ENCODE measurements at regions of chr2 and their contacts with region 1.

Region 1: DNA sequence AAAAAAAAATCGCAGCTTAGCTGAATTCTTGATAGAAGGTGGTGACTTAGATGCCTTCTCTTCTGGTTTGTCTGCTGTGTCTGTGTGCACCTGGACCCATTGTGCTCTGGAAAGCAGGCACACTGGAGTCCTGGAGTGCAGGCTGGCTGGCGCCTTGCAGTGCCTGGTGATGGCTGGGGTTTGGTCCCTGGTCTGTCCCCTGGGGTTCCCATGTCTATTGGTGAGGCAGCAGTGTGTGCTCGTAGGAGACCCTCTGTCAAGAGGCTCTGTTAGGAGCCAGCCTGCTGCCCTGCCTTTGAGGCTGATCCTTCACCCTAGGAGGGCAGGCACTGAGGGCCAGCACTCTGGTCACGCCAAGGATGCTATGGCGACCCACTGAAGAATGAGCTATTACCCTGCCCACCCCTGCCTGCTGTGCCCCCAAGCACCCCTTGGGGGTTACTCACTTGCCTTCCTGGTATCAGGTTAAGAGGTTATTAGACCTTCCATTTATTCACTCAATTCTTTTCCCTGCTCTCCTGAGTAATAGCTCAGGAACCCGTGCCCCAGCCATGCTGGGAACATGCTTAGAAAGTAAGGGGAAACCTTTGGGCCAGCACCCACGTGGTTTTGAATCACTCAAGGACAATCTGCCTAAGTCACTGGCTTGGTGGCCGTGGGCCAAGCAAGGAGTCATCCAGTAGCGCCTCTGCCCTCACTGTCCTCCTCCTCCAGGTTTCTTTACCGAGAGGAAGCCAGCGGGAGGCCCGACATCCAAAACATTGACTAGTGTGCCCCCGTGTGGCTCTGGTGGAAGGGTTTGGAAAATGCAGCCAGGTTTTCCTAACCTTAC is 284.5 kb downstream of the PRKCE start:
- DNase-seq: peak; percentile 94 to 99
- H3K4me3 ChIP-seq: no peak overlapping the region
- H3K27ac ChIP-seq: peak overlapping the region; percentile 55
- H3K4me1 ChIP-seq: peaks cover 44% of the 10 kb centered on the region
- H3K27me3 ChIP-seq: no peaks in the 10 kb centered on the region
- CTCF ChIP-seq: peak; percentile 93

Region 2: DNA sequence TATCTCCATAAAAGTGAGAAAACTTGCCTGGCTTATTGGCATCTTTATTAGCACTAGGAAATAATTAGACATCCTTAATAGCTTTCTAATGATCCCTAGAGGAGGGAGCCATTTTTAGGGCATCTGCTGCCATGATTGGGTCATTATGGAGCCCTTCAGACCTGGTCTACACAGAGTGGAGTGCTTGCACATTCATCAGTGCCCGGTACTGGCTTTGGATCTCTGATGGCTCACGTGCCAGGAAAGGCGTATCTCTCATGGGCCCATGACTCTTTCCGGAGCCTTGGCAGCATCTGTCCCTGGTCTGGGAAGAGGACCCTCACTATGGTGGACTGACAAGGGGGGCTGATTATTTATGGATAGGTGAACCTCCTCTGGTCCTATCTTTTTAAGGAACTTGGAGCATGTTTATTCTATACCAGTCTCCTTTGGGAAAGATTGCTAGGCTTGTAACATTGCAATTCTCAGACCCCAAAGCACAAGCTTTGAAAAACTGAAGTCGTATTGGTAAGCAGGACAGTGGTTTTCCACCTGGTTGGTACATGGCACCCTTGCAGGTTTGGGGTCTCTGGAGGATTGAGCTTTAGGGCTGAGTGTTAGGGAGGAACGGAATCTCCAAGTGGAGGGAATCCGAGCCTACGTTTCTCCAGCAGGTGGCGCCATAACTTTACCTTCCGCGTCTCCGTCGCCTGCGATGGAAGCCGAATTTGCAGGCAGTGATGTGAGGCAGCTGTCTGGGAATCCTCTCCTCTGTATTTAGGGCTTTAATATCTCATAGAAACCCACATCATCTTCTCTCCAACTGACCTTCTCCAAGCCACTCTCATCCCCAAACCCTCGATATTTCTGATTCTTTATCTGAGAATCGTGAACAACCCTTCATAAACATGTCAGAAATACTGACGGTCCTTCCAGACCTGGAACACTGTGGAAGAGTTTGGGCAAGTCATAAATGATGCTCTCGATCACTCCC is 954.6 kb before region 1 on chr2:
- CTCF ChIA-PET with region 1: no interaction called
- POLR2A ChIA-PET with region 1: no interaction called
- intact Hi-C with region 1: loop called (anchors 5 kb)
- DNase-seq: peak; percentile 62 to 76
- H3K4me3 ChIP-seq: no peak overlapping the region
- H3K27ac ChIP-seq: no peak overlapping the region
- H3K4me1 ChIP-seq: no peaks in the 10 kb centered on the region
- H3K27me3 ChIP-seq: no peaks in the 10 kb centered on the region
- CTCF ChIP-seq: peak; percentile 96

Region 3: GRCh38 chr2:45675263-45675812 is 260.7 kb before region 1 on chr2:
- CTCF ChIA-PET with region 1: no interaction called
- POLR2A ChIA-PET with region 1: no interaction called
- intact Hi-C with region 1: loop called (anchors 1 kb)
- DNase-seq: peak; percentile 72 to 99
- H3K4me3 ChIP-seq: peak overlapping the region; percentile 32; the same call in 1 of the 2 replicates
- H3K27ac ChIP-seq: peak overlapping the region; percentile 94
- H3K4me1 ChIP-seq: peaks cover 85% of the 10 kb centered on the region
- H3K27me3 ChIP-seq: no peaks in the 10 kb centered on the region
- CTCF ChIP-seq: no peak

Region 4: DNA sequence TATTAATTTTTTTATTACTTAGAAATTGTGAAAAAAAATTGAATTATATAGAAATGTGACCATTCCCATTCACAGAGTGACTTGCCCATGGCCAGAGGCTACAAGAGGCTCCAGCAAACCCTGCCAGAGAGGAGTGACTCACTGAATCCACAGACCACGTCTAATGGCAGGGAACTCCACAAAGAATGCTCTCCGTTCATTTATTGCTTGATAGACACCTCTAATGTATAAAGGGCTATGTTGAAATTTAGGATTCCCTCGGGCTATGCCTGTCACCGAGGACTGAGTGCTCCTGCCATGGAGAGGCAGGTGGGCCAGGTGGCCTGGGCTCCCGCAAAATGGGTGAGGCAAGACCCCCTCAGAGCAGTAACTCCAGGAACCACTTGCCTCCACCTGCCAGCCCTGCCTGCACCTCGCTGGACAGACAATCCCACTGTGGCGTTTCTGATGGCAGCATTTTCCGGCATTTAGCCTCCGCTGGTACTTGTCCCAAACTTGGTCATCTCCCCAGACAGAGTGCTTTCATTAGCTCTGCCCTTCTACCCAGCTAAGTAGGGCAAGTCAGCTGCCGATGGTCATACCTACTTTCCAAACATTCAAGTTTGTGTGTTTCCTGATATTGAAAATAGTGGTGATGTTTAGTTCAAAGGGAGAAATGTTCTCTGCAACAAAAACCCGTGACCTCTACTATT is 84.2 kb before region 1 on chr2:
- CTCF ChIA-PET with region 1: no interaction called
- POLR2A ChIA-PET with region 1: no interaction called
- intact Hi-C with region 1: loop called (anchors 1 kb)
- DNase-seq: peak; percentile 71 to 100
- H3K4me3 ChIP-seq: peak overlapping the region; percentile 15; the same call in 1 of the 2 replicates
- H3K27ac ChIP-seq: peak overlapping the region; percentile 58
- H3K4me1 ChIP-seq: peaks cover 36% of the 10 kb centered on the region
- H3K27me3 ChIP-seq: no peaks in the 10 kb centered on the region
- CTCF ChIP-seq: no peak

Region 5: GRCh38 chr2:45964226-45964845 is 28.3 kb after region 1 on chr2:
- CTCF ChIA-PET with region 1: no interaction called
- POLR2A ChIA-PET with region 1: interaction called, 4 read pairs
- intact Hi-C with region 1: loop called (anchors 1 kb)
- DNase-seq: peak; percentile 99 to 100
- H3K4me3 ChIP-seq: no peak overlapping the region
- H3K27ac ChIP-seq: peak overlapping the region; percentile 84
- H3K4me1 ChIP-seq: peaks cover 58% of the 10 kb centered on the region
- H3K27me3 ChIP-seq: no peaks in the 10 kb centered on the region
- CTCF ChIP-seq: no peak

Region 6: GRCh38 chr2:46306330-46306751 is 370.3 kb after region 1 on chr2:
- CTCF ChIA-PET with region 1: no interaction called
- POLR2A ChIA-PET with region 1: no interaction called
- intact Hi-C with region 1: loop called (anchors 2 kb)
- DNase-seq: peak; percentile 40 to 100
- H3K4me3 ChIP-seq: peak overlapping the region; percentile 43; the same call in 1 of the 2 replicates
- H3K27ac ChIP-seq: peak overlapping the region; percentile 87
- H3K4me1 ChIP-seq: peaks cover 98% of the 10 kb centered on the region
- H3K27me3 ChIP-seq: no peaks in the 10 kb centered on the region
- CTCF ChIP-seq: no peak